ENCODE measurements at regions of chr22 and their contacts with region 1.

Region 1: GRCh38 chr22:30289134-30289979 is at the start of gene CASTOR1:
- DNase-seq: peak; percentile 99
- H3K4me3 Mint-ChIP-seq: peak within 1 kb of the TSS; percentile 77
- H3K27ac Mint-ChIP-seq: peak within 1 kb of the TSS; percentile 68
- H3K4me1 Mint-ChIP-seq: peaks cover 10% of the 10 kb centered on the region
- H3K27me3 Mint-ChIP-seq: no peaks in the 10 kb centered on the region
- CTCF ChIP-seq: no peak
- total RNA-seq, gene CASTOR1: 12.0 and 14.2 TPM in 2 replicates

Region 2: GRCh38 chr22:30262917-30263741 is 26.2 kb before region 1 on chr22:
- CTCF ChIA-PET with region 1: interaction called, 4 read pairs
- intact Hi-C with region 1: loop called (anchors 1 kb)
- DNase-seq: peak; percentile 90
- H3K4me3 Mint-ChIP-seq: peak overlapping the region; percentile 20
- H3K27ac Mint-ChIP-seq: peak overlapping the region; percentile 60
- H3K4me1 Mint-ChIP-seq: peaks cover 48% of the 10 kb centered on the region
- H3K27me3 Mint-ChIP-seq: no peaks in the 10 kb centered on the region
- CTCF ChIP-seq: peak; percentile 98

Region 3: GRCh38 chr22:30326706-30327362 is 37.5 kb after region 1 on chr22 and contains the start of gene TBC1D10A:
- CTCF ChIA-PET with region 1: interaction called, 65 read pairs
- intact Hi-C with region 1: loop called (anchors 1 kb)
- DNase-seq: peak; percentile 97
- H3K4me3 Mint-ChIP-seq: peak within 1 kb of the TSS; percentile 78
- H3K27ac Mint-ChIP-seq: peak within 1 kb of the TSS; percentile 59
- H3K4me1 Mint-ChIP-seq: peaks cover 38% of the 10 kb centered on the region
- H3K27me3 Mint-ChIP-seq: no peaks in the 10 kb centered on the region
- CTCF ChIP-seq: no peak
- total RNA-seq, gene TBC1D10A: 24.5 and 24.8 TPM in 2 replicates

Region 4: GRCh38 chr22:30340911-30341685 is 51.7 kb after region 1 on chr22:
- CTCF ChIA-PET with region 1: no interaction called
- intact Hi-C with region 1: no loop called
- DNase-seq: no peak
- H3K4me3 Mint-ChIP-seq: no peak overlapping the region
- H3K27ac Mint-ChIP-seq: no peak overlapping the region
- H3K4me1 Mint-ChIP-seq: no peaks in the 10 kb centered on the region
- H3K27me3 Mint-ChIP-seq: no peaks in the 10 kb centered on the region
- CTCF ChIP-seq: no peak

Region 5: DNA sequence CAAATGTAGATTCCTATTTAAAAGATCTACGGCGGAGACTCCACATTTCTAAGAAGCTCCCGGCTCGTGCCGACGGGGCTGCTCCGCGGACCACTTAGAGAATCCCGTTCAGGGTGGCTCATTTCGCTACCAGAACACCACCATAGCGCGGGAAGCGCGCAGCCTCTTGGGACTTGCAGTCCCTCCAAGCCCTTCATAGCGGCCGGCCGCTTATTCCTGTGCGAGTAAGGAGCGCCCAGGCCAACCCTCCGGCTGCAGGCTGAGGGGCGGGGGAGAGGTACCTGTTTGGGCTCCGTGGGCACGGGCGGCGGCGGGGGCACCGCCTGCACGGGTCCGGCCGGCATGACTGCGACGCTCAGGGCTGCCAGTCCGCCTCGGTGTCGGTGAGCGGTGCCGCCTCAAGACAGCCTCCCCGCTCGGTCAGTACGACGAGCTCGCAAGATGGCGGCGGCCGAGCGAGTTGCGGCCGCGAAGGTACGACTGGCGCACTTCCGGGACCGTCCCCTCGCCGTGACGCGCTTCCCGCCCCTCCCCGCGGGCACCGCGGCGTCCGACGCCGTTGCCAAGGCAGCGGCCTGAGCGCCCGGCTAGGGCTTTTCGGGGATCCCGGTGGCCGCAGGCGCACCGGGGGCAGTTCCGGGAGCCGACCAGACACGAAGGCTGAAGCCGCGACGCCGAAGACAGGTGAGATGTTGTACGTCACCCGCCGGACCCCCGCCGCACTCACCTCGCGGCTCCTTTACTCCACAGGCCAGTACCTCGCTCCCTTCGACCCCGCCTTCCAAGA is 67.3 kb after region 1 on chr22 and contains the starts of genes CCDC157 and SF3A1:
- CTCF ChIA-PET with region 1: interaction called, 10 read pairs
- intact Hi-C with region 1: no loop called
- DNase-seq: peak; percentile 92
- H3K4me3 Mint-ChIP-seq: peak within 1 kb of the TSS; percentile 94
- H3K27ac Mint-ChIP-seq: peak within 1 kb of the TSS; percentile 96
- H3K4me1 Mint-ChIP-seq: peaks cover 35% of the 10 kb centered on the region
- H3K27me3 Mint-ChIP-seq: no peaks in the 10 kb centered on the region
- CTCF ChIP-seq: no peak
- total RNA-seq, gene CCDC157: 5.0 and 5.5 TPM in 2 replicates
- total RNA-seq, gene SF3A1: 181 and 197 TPM in 2 replicates

Region 6: DNA sequence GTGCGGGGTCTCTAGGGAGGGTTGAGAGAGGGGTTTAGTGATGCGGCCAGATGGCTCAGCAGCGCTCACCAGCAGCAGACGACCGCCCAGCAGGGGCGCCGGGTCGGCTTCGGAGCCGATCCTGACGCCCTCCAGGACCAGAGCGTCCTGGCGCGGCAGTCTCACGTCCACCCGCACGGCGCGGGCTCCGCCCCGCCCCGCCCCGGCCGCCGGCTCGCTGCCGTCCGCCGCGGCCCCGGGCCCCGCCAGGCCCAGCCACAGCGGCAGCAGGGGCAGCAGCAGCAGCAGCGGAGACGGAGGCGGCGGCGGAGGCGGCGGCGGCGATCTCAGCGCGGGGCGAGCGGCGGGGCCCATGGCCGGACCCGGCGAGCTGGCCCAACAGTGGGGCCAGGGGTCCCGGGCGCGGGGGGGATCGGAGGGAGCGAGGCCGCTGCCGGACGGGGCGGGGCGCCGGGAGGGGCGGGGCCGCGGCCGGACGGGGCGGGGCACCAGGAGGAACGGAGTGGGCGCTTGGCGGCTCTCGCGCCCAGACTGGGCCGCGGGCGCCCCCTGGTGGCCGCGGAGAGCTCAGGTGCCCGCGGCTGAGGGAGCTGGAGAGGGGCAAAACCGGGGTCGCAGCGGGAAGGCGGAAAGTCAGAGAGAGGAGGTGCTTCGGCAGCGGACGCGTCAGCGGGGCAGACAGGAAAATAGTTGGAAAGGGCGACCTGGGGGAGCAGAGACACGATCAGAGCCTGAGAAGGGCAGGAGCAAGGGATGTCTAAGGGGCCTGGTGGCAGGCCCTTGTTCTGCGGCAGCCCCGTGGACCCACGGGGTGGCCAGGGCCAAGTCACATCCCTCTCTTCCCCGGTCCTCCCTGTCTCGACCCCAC is 97.8 kb after region 1 on chr22 and contains the start of gene RNF215:
- CTCF ChIA-PET with region 1: interaction called, 26 read pairs
- intact Hi-C with region 1: no loop called
- DNase-seq: peak; percentile 93
- H3K4me3 Mint-ChIP-seq: peak within 1 kb of the TSS; percentile 77
- H3K27ac Mint-ChIP-seq: peak within 1 kb of the TSS; percentile 71
- H3K4me1 Mint-ChIP-seq: peaks cover 18% of the 10 kb centered on the region
- H3K27me3 Mint-ChIP-seq: no peaks in the 10 kb centered on the region
- CTCF ChIP-seq: peak; percentile 92
- total RNA-seq, gene RNF215: 42.5 and 48.8 TPM in 2 replicates

Region 7: DNA sequence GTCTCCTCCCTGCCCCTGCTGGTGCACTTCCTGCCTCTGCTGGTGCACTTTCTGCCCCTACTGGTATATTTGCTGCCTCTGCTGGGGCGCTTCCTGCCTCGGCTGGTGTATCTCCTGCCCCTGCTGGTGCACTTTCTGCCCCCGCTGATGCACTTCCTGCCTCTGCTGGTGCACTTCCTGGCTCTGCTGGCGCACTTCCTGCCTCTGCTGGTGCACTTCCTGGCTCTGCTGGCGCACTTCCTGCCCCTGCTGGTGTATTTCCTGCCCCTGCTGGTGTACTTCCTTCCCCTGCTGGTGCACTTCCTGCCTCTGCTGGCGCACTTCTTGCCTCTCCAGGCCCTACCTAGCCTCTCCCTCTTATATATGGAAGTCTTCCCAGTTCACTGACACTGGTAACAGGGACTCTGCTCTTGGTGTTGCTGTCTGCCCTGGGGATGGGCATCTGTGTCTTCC is 146.3 kb after region 1 on chr22:
- CTCF ChIA-PET with region 1: no interaction called
- intact Hi-C with region 1: no loop called
- DNase-seq: no peak
- H3K4me3 Mint-ChIP-seq: no peak overlapping the region
- H3K27ac Mint-ChIP-seq: no peak overlapping the region
- H3K4me1 Mint-ChIP-seq: peaks cover 23% of the 10 kb centered on the region
- H3K27me3 Mint-ChIP-seq: no peaks in the 10 kb centered on the region
- CTCF ChIP-seq: no peak

Measured in Calu3 (cell line).